Activated naive CD4-positive, alpha-beta T cell treated with anti-CD3 and anti-CD28 coated beads for 36 hours (primary cell): ENCODE measurements at regions of chr20 and their contacts with region 1.

Region 1: GRCh38 chr20:35741892-35742740 is at the start of gene RBM39:
- DNase-seq: peak; percentile 100
- H3K4me3 Mint-ChIP-seq: peak within 1 kb of the TSS; percentile 99
- H3K27ac Mint-ChIP-seq: peak within 1 kb of the TSS; percentile 100
- H3K4me1 Mint-ChIP-seq: peaks cover 38% of the 10 kb centered on the region
- H3K27me3 Mint-ChIP-seq: no peaks in the 10 kb centered on the region
- total RNA-seq, gene RBM39: 297 to 304 TPM

Region 2: DNA sequence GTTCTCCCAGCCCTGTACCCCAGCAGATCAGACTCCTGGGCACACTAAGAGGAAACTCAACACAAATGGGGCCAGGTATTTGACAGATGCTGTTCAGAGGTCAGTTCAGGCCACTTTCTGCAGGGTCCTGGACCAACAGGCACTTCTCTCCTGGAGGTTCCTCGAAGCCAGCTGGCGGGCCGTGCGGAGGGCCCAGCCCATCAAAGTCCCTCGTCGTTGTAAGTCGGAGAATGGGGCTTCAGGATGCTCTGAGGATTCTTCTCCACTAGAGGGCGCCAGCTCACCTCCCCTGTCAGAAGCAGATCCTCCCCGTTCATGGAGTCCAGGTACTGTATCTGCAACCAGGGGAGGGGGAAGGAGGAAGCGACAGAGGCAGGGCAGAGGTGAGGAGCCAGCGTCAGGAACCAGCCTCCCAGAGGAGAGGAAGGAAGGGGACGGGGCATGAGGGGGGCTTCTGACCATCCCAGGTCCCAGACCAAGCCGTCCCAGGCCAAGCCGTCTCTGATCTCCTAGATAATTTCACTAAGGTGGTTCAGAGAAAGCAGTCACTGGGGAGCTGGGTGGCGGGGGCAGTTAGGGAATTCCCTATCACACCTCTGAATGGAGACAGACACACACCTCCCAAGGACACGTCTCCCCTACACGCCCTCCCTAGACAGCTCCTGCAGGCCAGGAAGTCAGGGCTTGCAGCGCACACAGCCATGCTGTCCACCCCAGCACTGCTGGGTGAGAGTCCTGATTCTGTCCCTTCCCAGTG is 438.2 kb before region 1 on chr20:
- CTCF ChIA-PET with region 1: no interaction called
- intact Hi-C with region 1: loop called (anchors 5 kb)
- DNase-seq: peak; percentile 95
- H3K4me3 Mint-ChIP-seq: no peak overlapping the region
- H3K27ac Mint-ChIP-seq: peak overlapping the region; percentile 10
- H3K4me1 Mint-ChIP-seq: peaks cover 54% of the 10 kb centered on the region
- H3K27me3 Mint-ChIP-seq: no peaks in the 10 kb centered on the region

Region 3: DNA sequence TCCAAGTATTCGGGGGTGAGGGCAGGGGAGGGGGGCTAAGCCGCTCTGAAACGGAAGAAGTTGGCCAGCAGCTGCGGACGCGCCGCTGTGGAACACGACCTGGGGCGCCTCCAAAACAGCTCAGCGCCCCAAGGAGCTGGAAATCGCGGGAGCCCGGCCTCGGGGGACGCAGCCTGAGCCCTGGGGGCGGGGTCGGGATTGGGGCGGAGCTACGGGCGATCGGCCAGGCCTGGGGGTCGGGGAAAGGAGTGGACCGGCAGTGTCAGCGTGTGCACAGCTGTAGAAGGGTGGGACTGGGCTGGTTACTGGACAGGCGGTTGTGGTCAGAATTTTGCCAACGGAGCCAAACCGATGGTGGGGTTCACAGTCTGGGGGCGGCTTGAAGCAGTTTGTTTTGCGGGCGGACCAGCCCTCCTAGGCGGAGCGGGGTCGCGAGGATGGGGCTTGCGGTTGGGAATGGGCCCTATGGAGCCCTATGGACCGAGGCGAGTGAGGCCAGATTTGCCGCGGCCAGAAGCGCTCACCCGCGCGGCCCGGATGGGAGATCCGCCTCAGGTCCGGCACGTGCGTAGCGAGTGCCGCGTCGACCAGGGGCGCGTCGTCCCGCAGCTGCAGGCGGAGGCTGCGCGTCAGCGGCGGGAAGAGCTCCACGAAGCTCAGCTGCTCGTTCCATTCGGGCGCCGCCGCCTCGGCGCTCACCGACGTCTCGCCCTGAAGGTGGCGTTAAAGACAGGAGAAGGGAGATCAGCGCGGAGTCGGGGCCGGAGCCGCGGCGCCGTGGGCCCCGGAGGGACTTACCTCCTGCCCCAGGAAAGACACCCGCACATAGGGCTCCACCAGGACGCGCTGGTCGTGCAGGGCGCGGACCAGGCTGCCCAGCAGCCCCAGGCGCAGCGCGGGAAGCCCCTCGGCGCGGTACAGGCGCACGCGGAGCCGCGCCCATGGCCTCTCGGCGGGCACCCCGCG is 140.8 kb before region 1 on chr20:
- CTCF ChIA-PET with region 1: no interaction called
- intact Hi-C with region 1: loop called (anchors 5 kb)
- DNase-seq: peak; percentile 91
- H3K4me3 Mint-ChIP-seq: peak overlapping the region; percentile 64
- H3K27ac Mint-ChIP-seq: no peak overlapping the region
- H3K4me1 Mint-ChIP-seq: peaks cover 7% of the 10 kb centered on the region
- H3K27me3 Mint-ChIP-seq: peaks cover 13% of the 10 kb centered on the region

Region 4: DNA sequence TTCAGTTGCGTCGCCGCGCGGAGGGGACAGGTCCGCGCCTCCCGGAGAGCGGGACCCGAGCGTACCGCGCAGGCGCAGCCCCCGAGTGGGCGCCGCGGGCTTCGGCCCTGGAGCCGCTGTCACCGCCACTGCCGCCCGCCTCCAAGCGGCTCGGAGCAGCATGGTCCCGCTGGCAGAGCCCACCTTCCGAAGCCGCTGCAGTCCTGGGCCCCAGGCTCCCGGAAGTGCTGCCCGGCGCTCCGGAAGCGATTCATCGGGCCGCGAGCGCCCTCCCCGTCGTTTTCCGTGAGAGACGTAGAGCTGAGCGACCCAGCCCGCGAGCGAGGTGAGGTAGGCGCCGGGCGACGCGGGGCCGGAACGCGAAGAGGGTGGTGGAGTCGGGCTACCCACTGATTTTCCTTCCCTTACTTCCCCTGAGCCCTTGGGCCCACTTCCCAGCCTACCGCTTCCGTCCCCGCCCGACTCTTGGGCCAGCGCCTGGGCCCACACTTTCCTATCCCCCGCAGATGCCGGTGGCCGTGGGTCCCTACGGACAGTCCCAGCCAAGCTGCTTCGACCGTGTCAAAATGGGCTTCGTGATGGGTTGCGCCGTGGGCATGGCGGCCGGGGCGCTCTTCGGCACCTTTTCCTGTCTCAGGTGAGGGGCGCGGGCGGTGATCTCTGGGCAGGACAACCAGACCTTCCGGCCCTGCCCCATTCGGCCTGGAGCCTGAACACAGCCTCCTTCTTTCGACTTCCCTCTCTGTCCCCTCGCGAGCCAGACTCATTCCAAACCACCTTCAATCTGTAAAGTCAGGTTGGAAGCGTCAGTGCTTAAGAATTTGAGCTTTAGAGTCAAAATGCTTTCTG is 42.8 kb before region 1 on chr20 and contains the starts of genes NFS1 and ROMO1:
- CTCF ChIA-PET with region 1: interaction called, 6 read pairs
- intact Hi-C with region 1: loop called (anchors 2 kb)
- DNase-seq: peak; percentile 89
- H3K4me3 Mint-ChIP-seq: peak within 1 kb of the TSS; percentile 93
- H3K27ac Mint-ChIP-seq: peak within 1 kb of the TSS; percentile 92
- H3K4me1 Mint-ChIP-seq: peaks cover 40% of the 10 kb centered on the region
- H3K27me3 Mint-ChIP-seq: no peaks in the 10 kb centered on the region
- total RNA-seq, gene NFS1: 33.6 to 38.1 TPM
- total RNA-seq, gene ROMO1: 120 to 134 TPM

Region 5: GRCh38 chr20:35796571-35796970 is 54.5 kb after region 1 on chr20:
- CTCF ChIA-PET with region 1: no interaction called
- intact Hi-C with region 1: no loop called
- DNase-seq: no peak
- H3K4me3 Mint-ChIP-seq: no peak overlapping the region
- H3K27ac Mint-ChIP-seq: no peak overlapping the region
- H3K4me1 Mint-ChIP-seq: peaks cover 43% of the 10 kb centered on the region
- H3K27me3 Mint-ChIP-seq: no peaks in the 10 kb centered on the region

Region 6: DNA sequence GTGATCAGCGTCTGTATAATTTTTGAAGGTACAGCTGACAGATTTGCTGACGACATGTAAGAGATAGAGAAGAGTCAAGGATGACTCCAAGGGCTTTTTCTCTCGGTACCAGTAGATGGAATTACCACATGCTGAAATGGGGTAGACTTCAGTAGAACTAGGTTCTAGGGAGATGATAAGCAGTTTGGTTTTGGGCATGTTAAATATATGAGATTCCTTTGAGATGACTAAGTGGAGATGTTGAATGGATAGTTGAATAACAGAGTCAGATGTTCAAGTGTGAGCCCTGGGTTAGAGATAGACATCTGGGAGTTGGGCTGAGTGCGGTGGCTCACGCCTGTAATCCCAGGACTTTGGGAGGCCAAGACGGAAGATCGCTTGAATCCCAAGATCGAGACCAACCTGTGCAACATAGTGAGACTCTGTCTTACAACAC is 79.7 kb after region 1 on chr20:
- CTCF ChIA-PET with region 1: no interaction called
- intact Hi-C with region 1: loop called (anchors 1 kb)
- DNase-seq: no peak
- H3K4me3 Mint-ChIP-seq: no peak overlapping the region
- H3K27ac Mint-ChIP-seq: no peak overlapping the region
- H3K4me1 Mint-ChIP-seq: peaks cover 31% of the 10 kb centered on the region
- H3K27me3 Mint-ChIP-seq: no peaks in the 10 kb centered on the region

Region 7: DNA sequence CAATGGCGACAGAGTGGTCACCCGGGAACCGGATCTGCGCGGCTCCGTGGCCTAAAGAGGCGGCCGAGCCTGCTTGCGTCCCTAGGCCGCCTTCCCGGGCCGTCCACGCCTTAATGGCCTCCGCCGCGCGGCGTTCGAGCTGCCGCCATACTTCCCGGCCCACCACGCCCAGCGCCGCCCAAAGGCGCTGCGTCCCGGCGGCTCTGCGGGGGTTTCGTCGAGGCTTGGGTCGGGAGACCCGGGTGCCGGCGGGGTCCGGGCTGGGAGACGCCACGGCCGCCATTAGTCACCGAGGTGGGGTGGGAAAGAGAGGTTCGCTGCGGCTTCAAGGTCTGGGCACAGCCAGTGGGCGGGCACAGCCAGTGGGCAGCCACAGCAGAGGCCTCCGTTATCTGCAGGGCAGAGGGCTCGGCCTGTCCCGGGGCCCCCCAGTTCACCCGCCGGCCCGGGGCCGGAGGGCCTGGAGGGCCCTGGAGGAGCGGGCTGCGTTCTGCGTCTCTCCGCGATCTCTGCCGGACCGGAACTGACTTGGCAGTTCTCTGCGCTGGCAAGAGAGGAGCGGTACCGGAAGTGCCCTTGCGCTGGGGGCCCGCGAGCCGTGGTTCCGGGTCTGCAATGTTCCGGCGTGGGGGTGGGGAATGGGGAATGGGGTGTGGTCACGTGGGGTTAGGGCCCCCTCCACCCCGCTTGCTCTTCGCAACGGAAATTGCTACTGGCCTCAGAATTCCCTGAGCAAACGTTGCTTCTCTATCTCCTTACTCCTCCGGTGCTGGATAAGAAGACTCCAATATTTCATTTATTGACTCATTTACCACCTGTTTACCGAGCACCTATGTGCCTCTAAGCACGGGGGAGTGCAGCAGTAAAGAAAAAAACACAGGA is 308.6 kb after region 1 on chr20:
- CTCF ChIA-PET with region 1: no interaction called
- intact Hi-C with region 1: loop called (anchors 5 kb)
- DNase-seq: peak; percentile 95
- H3K4me3 Mint-ChIP-seq: peak overlapping the region; percentile 82
- H3K27ac Mint-ChIP-seq: peak overlapping the region; percentile 83
- H3K4me1 Mint-ChIP-seq: peaks cover 35% of the 10 kb centered on the region
- H3K27me3 Mint-ChIP-seq: no peaks in the 10 kb centered on the region

Region 8: GRCh38 chr20:36317675-36318074 is 575.6 kb after region 1 on chr20:
- CTCF ChIA-PET with region 1: no interaction called
- intact Hi-C with region 1: no loop called
- DNase-seq: no peak
- H3K4me3 Mint-ChIP-seq: no peak overlapping the region
- H3K27ac Mint-ChIP-seq: no peak overlapping the region
- H3K4me1 Mint-ChIP-seq: no peaks in the 10 kb centered on the region
- H3K27me3 Mint-ChIP-seq: peaks cover 5% of the 10 kb centered on the region